ENCODE measurements at regions of chr3 and their contacts with region 1.

Region 1: GRCh38 chr3:61858056-61858455 is 296.7 kb downstream of the PTPRG start:
- DNase-seq: peak; percentile 12
- H3K4me3 ChIP-seq: no peak overlapping the region
- H3K27ac ChIP-seq: no peak overlapping the region
- H3K4me1 ChIP-seq: no peaks in the 10 kb centered on the region
- H3K27me3 ChIP-seq: no peaks in the 10 kb centered on the region
- CTCF ChIP-seq: peak; percentile 10 to 61

Region 2: GRCh38 chr3:61936344-61936937 is 78.4 kb after region 1 on chr3:
- CTCF ChIA-PET with region 1: interaction called, 5 read pairs
- dilution Hi-C with region 1: no loop called
- in situ Hi-C with region 1: no loop called
- intact Hi-C with region 1: loop called (anchors 2 kb)
- DNase-seq: no peak
- H3K4me3 ChIP-seq: no peak overlapping the region
- H3K27ac ChIP-seq: no peak overlapping the region
- H3K4me1 ChIP-seq: no peaks in the 10 kb centered on the region
- H3K27me3 ChIP-seq: no peaks in the 10 kb centered on the region
- CTCF ChIP-seq: peak; percentile 69 to 71

Region 3: GRCh38 chr3:62035402-62036057 is 177.5 kb after region 1 on chr3:
- CTCF ChIA-PET with region 1: interaction called, 19 read pairs
- dilution Hi-C with region 1: no loop called
- in situ Hi-C with region 1: no loop called
- intact Hi-C with region 1: no loop called
- DNase-seq: no peak
- H3K4me3 ChIP-seq: no peak overlapping the region
- H3K27ac ChIP-seq: no peak overlapping the region
- H3K4me1 ChIP-seq: no peaks in the 10 kb centered on the region
- H3K27me3 ChIP-seq: no peaks in the 10 kb centered on the region
- CTCF ChIP-seq: no peak

Measured in mammary epithelial cell (primary cell).